ENCODE measurements at regions of chr12 and their contacts with region 1.

Region 1: DNA sequence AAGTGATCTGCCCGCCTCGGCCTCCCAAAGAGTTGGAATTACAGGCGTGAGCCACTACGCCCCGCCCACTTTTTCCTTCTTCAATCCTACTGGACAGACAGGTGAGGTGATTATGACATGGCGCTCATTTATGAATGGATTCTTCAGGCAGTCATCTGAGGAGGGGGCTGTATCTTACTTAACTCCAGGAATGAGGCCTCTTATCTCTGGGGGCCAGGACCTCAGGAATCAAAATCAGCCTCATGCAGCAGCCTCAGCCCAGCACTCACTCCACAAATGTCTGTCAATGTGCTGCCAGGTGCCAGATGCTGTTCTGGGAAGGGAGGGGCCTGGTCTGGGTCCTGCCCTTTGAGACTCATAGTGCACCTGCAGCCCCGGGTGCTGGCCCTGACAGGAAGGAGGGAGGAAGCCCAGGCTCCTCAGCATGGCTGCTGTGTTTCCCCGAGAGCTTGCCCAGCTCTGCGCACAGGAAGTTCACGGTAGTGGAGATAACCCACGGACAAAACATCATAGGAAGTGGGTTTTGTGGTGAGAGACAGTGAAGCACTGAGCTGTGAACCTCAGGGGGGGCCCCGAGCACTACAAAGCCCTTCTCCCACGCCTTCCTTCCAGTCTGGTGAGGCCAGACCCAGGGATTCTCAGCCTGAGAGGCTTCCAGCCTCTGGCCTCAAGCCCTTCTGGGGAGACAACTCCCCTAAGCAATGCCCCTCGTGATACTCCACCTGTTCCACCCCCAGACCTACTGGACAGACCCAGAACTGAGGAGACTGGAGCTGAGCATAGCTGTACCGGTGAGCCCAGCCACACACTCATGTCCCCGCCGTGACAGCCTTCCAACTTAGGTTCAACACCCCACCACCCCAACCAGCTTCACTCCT is 22.3 kb downstream of the GALNT6 start:
- DNase-seq: peak; percentile 89
- H3K4me3 Mint-ChIP-seq: peak overlapping the region; percentile 56
- H3K27ac Mint-ChIP-seq: peak overlapping the region; percentile 70
- H3K4me1 Mint-ChIP-seq: peaks cover 67% of the 10 kb centered on the region
- H3K27me3 Mint-ChIP-seq: peaks cover 7% of the 10 kb centered on the region

Region 2: DNA sequence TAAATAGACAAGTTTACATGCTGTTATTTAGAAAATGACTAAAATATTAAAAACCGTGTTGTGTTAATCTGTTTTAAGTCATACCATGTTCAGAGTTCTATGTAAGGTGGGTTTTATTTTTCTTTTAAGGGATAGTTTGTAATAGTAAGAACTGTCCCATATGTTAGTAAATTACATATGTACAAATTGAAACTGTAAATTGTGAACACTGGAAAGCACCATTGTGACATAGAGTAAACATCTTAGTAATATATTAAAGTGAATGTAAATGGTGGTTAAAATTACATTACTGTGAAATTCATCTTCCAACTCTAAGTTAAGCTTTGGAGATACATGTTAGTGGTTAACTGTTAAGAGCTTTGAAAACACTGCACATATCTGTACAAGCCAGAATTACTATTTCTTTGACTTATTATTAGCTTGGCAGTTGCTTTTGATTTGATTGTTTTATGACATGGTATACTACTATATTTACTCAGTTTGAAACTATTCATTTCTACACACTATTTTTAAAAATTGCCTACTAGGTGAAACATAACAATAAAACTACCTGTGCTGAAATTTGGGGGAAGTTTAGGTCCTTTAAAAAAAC is 891.5 kb before region 1 on chr12:
- intact Hi-C with region 1: no loop called
- DNase-seq: no peak
- H3K4me3 Mint-ChIP-seq: no peak overlapping the region
- H3K27ac Mint-ChIP-seq: no peak overlapping the region
- H3K4me1 Mint-ChIP-seq: no peaks in the 10 kb centered on the region
- H3K27me3 Mint-ChIP-seq: no peaks in the 10 kb centered on the region

Region 3: GRCh38 chr12:51265024-51265423 is 103.9 kb before region 1 on chr12:
- intact Hi-C with region 1: loop called (anchors 1 kb)
- DNase-seq: no peak
- H3K4me3 Mint-ChIP-seq: no peak overlapping the region
- H3K27ac Mint-ChIP-seq: no peak overlapping the region
- H3K4me1 Mint-ChIP-seq: peaks cover 14% of the 10 kb centered on the region
- H3K27me3 Mint-ChIP-seq: peaks cover 7% of the 10 kb centered on the region

Region 4: GRCh38 chr12:51391283-51392162 is 22.6 kb after region 1 on chr12 and contains the start of gene GALNT6:
- intact Hi-C with region 1: loop called (anchors 1 kb)
- DNase-seq: peak; percentile 64
- H3K4me3 Mint-ChIP-seq: peak within 1 kb of the TSS; percentile 90
- H3K27ac Mint-ChIP-seq: peak within 1 kb of the TSS; percentile 81
- H3K4me1 Mint-ChIP-seq: peaks cover 73% of the 10 kb centered on the region
- H3K27me3 Mint-ChIP-seq: peaks cover 2% of the 10 kb centered on the region
- total RNA-seq, gene GALNT6: 11.9 and 12.4 TPM in 2 replicates

Region 5: GRCh38 chr12:51482929-51483697 is 114.2 kb after region 1 on chr12:
- intact Hi-C with region 1: loop called (anchors 5 kb)
- DNase-seq: peak; percentile 11
- H3K4me3 Mint-ChIP-seq: peak overlapping the region; percentile 76
- H3K27ac Mint-ChIP-seq: peak overlapping the region; percentile 96
- H3K4me1 Mint-ChIP-seq: peaks cover 47% of the 10 kb centered on the region
- H3K27me3 Mint-ChIP-seq: peaks cover 4% of the 10 kb centered on the region